ENCODE measurements at regions of chr5 and their contacts with region 1.

Region 1: GRCh38 chr5:131109540-131110255 is 55.4 kb downstream of the HINT1 start:
- DNase-seq: peak in 2 of 10 donors; percentile 17 to 36

Region 2: DNA sequence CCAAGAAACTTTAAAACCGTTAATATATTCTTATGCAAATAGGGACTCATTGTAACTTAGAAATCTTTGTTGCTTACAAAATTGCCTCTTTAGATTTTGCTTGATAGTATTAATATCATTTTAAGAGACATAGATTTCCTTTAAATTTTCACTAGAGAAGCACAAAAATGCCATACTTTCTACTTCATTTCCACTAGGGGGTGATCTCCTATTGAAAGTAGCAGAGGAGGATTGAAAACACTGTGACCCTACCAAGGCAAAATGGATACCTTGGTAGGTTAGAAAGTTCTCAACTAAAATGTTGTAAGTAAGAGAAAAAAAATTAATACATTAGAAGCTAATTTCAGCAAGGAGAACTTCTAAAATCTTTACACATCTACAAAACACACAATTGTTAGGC is 1000.5 kb before region 1 on chr5:
- intact Hi-C with region 1: loop called (anchors 1 kb)
- DNase-seq: no peak

Measured in posterior cingulate gyrus (tissue), 11 donors.